Psoas muscle (tissue), 8 donors: ENCODE measurements at regions of chr3 and their contacts with region 1.

Region 1: GRCh38 chr3:100297784-100298183 is 36.8 kb upstream of the NIT2 start:
- DNase-seq: no peak
- ATAC-seq: no peak
- H3K4me3 ChIP-seq: no peak overlapping the region
- H3K27ac ChIP-seq: no peak overlapping the region
- H3K4me1 ChIP-seq: no peaks in the 10 kb centered on the region
- H3K27me3 ChIP-seq: no peaks in the 10 kb centered on the region
- CTCF ChIP-seq: no peak

Region 2: DNA sequence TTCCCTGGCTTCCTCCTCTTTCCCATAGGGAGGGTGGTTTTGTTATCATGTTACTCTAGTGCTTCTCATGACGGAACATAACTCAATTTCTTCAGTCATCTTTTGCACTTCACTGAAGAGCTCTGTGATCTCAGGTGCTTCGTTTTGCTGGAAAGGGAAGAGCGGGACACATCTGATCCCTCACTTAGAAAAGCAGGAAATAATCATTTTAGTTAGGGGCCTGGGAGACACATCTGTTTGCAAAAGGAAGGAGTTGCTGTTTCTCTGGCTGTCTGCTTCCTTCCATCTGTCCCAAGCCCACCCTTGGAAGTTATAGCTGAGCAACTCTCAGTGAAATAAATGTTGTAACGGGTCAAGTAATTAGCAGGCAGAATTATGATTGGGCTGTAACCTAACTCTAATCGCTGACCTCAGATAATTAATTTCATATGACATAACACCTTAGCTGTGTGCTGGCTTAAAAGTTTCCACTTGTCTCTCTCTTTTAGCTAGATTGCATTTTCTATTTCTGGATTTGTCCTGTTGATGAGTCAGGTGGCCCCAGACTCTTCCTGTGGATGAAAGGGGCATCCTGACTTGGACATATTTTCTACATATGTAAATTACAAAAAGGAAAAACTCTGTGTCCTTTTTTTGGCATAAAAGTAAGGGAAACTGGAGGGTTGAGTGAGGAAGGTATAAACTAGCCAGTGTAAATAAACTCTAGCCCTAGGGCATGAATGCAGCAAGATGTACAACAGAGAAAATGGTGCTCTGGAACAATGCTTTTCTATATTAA is 172.4 kb before region 1 on chr3:
- intact Hi-C with region 1: no loop called
- DNase-seq: no peak
- ATAC-seq: peak; percentile 24 to 82 (median 60)
- H3K4me3 ChIP-seq: peak overlapping the region; percentile 17
- H3K27ac ChIP-seq: peak overlapping the region; percentile 84
- H3K4me1 ChIP-seq: peaks cover 31% of the 10 kb centered on the region
- H3K27me3 ChIP-seq: no peaks in the 10 kb centered on the region
- CTCF ChIP-seq: no peak

Region 3: DNA sequence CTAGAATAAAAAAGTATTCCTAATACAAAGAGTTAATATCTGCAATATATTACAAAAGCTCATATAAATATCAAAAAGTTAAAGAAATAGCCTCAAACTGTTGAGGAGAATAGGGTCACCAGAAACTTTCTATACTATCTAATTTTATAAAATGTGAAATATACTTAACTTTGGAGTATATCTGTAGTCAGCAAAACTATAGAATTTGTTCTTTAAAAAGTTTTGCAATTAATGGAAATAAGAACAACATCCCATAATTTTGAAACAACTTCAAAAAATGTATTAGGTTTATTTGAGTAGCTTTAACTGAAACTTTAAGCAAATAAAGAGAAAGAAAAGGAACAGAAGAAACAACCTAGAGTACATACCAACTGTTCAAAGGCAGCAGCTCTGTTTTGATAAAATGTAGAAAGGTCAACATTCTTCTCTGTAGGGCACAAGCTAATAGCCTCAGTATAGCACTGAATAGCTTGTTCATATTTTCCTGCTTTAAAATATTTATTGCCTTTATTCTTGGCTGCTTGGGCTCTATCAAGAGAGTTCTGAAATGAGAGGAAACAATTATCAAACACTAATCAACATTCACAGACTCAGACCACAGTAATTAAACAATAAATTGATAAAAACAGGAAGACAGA is 88.8 kb after region 1 on chr3:
- intact Hi-C with region 1: loop called in 1 of 2 experiments (anchors 10 kb)
- DNase-seq: no peak
- ATAC-seq: no peak
- H3K4me3 ChIP-seq: no peak overlapping the region
- H3K27ac ChIP-seq: no peak overlapping the region
- H3K4me1 ChIP-seq: peaks cover 6% of the 10 kb centered on the region
- H3K27me3 ChIP-seq: no peaks in the 10 kb centered on the region
- CTCF ChIP-seq: no peak

Region 4: DNA sequence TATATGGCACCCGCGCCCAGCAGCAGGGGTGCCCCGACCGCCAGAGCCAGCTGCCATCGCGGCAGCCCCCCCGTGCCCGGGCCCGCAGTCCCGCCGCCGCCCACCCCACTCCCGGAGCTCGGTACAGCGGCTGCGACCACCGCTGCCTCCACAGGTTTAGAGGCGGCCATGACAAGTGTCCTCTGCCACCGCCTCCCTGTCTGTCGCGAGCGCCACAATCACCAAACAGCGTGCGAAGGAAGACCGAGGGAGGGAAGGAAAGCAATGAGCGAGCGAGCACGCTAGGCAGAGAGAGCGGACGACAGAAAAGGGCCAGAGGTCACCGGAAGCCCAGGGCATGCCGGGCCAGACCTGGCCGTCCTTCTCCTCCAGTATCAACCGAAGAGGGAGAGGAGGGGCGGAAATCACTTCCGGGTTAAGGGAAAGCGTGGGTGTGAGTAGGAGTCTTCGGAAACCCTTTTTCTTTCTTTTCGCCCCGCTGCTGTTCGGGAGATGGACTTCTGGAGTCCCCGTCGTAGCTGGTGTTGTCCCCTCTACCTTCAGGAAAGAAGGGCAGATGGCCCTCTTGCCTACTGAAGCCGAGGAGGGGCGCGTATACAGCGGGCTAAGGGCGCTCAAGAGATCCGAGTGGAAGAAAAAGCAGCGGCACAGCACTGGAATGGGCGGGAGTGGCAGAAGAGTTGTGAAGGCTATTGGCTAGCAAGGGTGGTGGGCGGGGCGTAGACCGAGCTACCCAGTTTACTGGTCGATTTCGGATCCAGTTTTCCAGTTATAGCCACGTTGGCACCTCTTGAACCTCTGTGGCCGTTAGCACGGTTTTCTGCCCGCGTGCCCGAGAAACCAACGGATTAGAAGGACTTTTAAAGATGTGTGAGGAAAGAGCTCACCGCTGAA is 103.2 kb after region 1 on chr3 and contains the starts of genes LNP1 and TOMM70:
- intact Hi-C with region 1: no loop called
- DNase-seq: peak; percentile 98
- ATAC-seq: peak; percentile 96 to 98 (median 96)
- H3K4me3 ChIP-seq: peak within 1 kb of the TSS; percentile 99
- H3K27ac ChIP-seq: peak within 1 kb of the TSS; percentile 96
- H3K4me1 ChIP-seq: peaks cover 54% of the 10 kb centered on the region
- H3K27me3 ChIP-seq: no peaks in the 10 kb centered on the region
- CTCF ChIP-seq: no peak
- total RNA-seq, gene LNP1: 1.6 to 3.2 (median 1.9) TPM
- total RNA-seq, gene TOMM70: 67.8 to 94.5 (median 84.1) TPM